ENCODE measurements at regions of chr9 and their contacts with region 1.

Region 1: DNA sequence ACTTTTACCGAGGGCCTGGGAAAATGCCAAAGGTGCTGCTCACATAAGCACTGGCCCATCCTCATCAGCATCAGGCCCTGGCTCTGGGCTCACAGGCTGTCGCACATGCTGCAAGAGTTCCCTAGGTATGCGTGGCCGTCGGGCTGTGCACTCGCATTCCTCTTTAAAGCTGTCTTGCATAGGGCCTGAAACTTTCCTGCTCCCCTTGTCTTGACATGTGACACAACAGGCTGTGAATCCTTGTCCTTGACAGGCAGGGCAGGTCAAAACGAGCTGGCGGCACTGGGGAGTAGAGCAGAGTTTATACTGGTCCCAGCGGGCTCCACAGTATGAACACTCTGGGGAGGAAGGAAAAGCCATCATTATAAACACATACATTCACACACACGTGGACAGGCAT is 30.7 kb downstream of the TSTD2 start:
- DNase-seq: no peak
- ATAC-seq: no peak
- H3K4me3 ChIP-seq: no peak overlapping the region
- H3K27ac ChIP-seq: no peak overlapping the region
- H3K4me1 ChIP-seq: peaks cover 0 to 5% (median 0%) of the 10 kb centered on the region in 4 donors
- H3K27me3 ChIP-seq: no peaks in the 10 kb centered on the region
- CTCF ChIP-seq: no peak
- POLR2A ChIP-seq: no peak

Region 2: DNA sequence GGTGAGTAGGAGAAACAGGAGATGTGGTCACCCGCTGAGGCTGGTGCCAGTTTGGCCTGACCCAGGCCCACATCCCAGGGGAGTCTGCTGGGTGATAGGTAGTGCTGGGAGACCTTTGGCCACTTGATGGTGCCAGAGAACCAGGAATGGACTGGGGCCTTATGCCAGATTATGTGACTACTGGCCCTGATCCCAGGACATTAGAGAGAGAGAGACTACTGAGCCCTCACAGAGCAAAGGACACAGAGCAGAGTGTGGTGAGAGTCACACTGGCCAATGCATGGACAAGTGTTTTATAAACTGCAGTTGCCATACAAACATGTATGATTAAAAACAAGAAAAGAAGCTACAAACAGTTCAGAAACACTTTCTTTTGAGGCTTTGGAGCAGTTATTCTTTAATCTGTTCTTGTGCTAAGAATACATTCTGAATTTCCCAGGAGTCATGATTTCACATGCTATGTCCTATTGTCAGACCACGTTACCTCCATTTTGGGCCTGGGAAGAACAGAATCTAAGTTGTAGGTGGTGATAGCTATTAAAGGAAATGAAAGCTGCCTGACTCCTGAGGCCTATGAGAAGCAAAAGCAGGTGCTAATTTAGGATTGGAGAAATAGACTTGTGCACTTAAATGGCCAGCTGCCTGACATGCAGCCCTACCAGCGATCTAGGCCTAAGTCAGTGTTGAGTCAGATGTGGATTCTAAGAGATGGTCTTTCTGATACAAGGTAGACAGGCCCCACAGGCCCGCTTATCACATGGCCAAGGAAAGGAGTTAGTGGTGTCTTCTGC is 133.6 kb before region 1 on chr9:
- intact Hi-C with region 1: loop called (anchors 5 to 10 kb)
- DNase-seq: peak; percentile 61 to 86 (median 69)
- ATAC-seq: peak; percentile 99 to 100 (median 100)
- H3K4me3 ChIP-seq: no peak overlapping the region
- H3K27ac ChIP-seq: peak overlapping the region; percentile 11 to 82 (median 63)
- H3K4me1 ChIP-seq: peaks cover 0 to 10% (median 3%) of the 10 kb centered on the region in 4 donors
- H3K27me3 ChIP-seq: no peaks in the 10 kb centered on the region
- CTCF ChIP-seq: peak; percentile 80 to 93 (median 88)
- POLR2A ChIP-seq: peak; percentile 12

Region 3: DNA sequence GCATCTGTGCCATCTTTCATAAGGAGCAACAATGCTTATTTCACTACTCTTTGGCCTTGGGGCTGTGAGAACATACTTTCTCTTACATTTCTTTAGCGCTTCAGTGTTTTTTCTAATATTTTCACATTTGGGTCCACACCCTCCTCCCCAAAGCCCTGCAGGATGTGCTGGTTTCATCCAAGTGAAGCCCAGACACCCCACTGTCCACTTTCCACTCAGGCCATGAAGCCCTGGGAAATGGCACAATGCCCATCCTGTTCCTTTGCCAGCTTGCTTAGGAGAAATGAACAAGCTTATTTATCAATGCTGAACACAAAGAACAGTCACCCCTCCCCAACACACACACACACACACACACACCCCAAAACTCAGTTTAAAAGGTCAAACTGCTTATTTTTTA is 118.3 kb before region 1 on chr9:
- intact Hi-C with region 1: no loop called
- DNase-seq: peak in 2 of 3 donors; percentile 33 to 64
- ATAC-seq: peak; percentile 40 to 68 (median 46)
- H3K4me3 ChIP-seq: no peak overlapping the region
- H3K27ac ChIP-seq: no peak overlapping the region
- H3K4me1 ChIP-seq: peaks cover 0 to 22% (median 6%) of the 10 kb centered on the region in 4 donors
- H3K27me3 ChIP-seq: no peaks in the 10 kb centered on the region
- CTCF ChIP-seq: no peak
- POLR2A ChIP-seq: no peak

Region 4: DNA sequence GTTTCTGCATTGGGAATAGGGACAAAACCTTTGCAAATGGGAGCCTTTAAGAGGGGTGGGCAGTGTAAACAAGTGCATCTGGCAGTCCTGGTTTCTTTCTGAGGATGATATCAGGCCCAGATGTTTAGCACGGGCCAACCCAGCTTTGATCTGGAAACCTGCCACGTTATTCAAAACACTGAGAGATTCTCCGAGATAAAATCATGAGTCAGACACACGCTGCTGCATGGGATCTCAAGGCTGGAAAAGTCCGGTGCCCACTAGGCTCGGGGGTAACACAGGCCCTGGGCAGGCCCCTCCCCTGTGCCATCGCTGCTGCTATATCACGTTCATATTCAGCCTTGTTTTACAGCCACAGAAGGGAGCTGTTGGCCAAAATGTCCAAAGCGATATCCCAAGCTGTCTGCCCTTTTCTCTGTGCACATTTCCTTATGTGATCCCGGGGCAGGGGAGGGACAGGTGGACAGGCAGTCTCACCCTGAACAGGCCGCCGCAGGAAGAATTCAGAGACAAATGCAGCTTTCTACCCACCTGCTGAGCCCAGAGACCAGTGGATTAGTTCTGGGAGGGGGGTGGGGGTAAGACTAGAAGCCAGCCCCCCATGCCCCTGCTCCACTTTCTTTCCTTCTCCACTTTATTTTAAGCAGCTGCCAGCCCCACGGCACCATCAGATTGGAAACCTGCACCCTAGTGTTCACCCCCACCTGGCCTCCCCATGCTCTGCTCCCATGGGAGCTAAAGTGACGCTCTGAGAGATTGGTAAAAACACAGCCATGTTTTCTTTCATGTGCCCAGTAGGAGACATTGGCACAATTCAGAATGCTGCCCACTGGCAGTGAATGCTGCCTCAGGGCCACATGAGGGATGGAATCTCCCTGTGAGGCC is 37.9 kb before region 1 on chr9:
- intact Hi-C with region 1: no loop called
- DNase-seq: peak in 1 of 3 donors; percentile 47
- ATAC-seq: peak; percentile 40 to 71 (median 54)
- H3K4me3 ChIP-seq: no peak overlapping the region
- H3K27ac ChIP-seq: peak overlapping the region in 1 of 3 donors; percentile 3
- H3K4me1 ChIP-seq: no peaks in the 10 kb centered on the region
- H3K27me3 ChIP-seq: no peaks in the 10 kb centered on the region
- CTCF ChIP-seq: no peak
- POLR2A ChIP-seq: no peak

Measured in right lobe of liver (tissue), 6 donors.